Endothelial cell of umbilical vein (primary cell): ENCODE measurements at regions of chr2 and their contacts with region 1.

Region 1: DNA sequence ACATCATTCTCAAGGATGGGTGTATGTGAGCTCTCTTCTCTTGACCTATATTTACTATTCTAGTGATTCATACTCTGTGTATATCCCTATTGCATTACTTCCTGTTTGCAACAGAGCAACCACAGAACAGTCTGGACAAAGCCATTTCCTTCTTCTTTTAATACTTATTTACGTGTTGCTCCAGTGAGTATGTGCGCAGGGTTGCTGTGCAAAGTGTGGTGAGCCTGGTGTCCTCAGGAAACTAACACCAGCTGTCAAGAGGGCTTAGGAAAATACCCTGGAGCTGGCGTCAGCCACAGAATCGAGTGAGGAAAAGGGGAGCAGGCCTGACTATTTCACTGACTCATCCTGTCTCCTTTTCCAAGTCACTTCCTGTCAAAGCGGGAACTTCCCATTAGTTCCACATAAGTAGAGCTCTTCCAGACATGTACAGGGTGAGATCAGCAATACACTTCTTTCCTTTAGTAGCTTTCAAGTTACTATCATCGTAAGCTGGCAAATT is 214.1 kb upstream of the COPS8 start:
- DNase-seq: peak; percentile 96
- H3K4me3 ChIP-seq: no peak overlapping the region
- H3K27ac ChIP-seq: peak overlapping the region; percentile 92
- H3K4me1 ChIP-seq: peaks cover 35% of the 10 kb centered on the region
- H3K27me3 ChIP-seq: no peaks in the 10 kb centered on the region
- CTCF ChIP-seq: no peak
- POLR2A ChIP-seq: no peak

Region 2: DNA sequence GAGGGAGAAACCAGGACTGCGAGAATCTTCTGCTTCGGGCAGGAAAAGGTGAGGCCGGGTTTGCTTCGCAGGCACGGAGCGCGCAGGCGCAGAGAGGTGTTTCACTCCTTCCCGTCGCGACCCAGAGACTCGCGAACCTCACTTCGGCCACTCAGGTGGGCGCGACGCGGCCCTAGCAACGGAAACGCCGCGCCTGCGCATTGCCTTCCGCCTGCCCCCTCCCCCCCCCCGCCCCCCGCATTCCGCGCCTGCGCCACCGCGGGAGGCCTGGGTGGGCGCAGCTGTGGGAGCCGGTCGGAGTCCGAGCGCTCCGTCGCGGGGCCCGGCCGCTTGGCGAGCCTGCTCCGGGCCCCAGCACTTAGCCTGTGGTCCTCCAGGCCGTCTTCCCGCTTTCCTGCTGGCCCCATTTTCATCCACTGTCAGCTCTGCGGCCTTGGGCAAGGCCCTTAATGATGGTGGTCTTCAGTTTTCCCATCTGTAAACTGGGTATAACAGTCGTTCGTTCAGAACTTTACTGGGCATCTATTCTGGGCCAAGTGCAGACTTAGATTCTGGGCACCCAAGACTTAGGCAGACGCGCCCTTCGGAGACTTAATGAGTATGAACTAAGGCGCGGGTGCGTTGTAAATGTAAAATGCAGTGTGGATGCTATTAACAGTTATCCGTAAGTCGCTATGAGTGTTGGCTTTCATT is 364.0 kb before region 1 on chr2:
- CTCF ChIA-PET with region 1: no interaction called
- POLR2A ChIA-PET with region 1: no interaction called
- dilution Hi-C with region 1: no loop called
- intact Hi-C with region 1: loop called (anchors 5 kb)
- DNase-seq: peak; percentile 66
- H3K4me3 ChIP-seq: peak overlapping the region; percentile 40 to 75 (median 59)
- H3K27ac ChIP-seq: no peak overlapping the region
- H3K4me1 ChIP-seq: peaks cover 22% of the 10 kb centered on the region
- H3K27me3 ChIP-seq: peaks cover 4 to 9% of the 10 kb centered on the region in 2 experiments
- CTCF ChIP-seq: no peak
- POLR2A ChIP-seq: no peak

Region 3: GRCh38 chr2:236824877-236825692 is 46.5 kb before region 1 on chr2:
- CTCF ChIA-PET with region 1: interaction called, 6 read pairs
- POLR2A ChIA-PET with region 1: no interaction called
- dilution Hi-C with region 1: no loop called
- intact Hi-C with region 1: loop called (anchors 1 kb)
- DNase-seq: peak; percentile 18
- H3K4me3 ChIP-seq: no peak overlapping the region
- H3K27ac ChIP-seq: no peak overlapping the region
- H3K4me1 ChIP-seq: peaks cover 37% of the 10 kb centered on the region
- H3K27me3 ChIP-seq: no peaks in the 10 kb centered on the region
- CTCF ChIP-seq: no peak
- POLR2A ChIP-seq: no peak

Region 4: GRCh38 chr2:236852100-236852978 is 19.2 kb before region 1 on chr2:
- CTCF ChIA-PET with region 1: interaction called, 4 read pairs
- POLR2A ChIA-PET with region 1: no interaction called
- dilution Hi-C with region 1: no loop called
- intact Hi-C with region 1: loop called (anchors 2 kb)
- DNase-seq: peak; percentile 95
- H3K4me3 ChIP-seq: no peak overlapping the region
- H3K27ac ChIP-seq: peak overlapping the region; percentile 46
- H3K4me1 ChIP-seq: peaks cover 8% of the 10 kb centered on the region
- H3K27me3 ChIP-seq: no peaks in the 10 kb centered on the region
- CTCF ChIP-seq: no peak
- POLR2A ChIP-seq: no peak

Region 5: GRCh38 chr2:237012577-237013267 is 141.2 kb after region 1 on chr2:
- CTCF ChIA-PET with region 1: no interaction called
- POLR2A ChIA-PET with region 1: no interaction called
- dilution Hi-C with region 1: no loop called
- intact Hi-C with region 1: loop called (anchors 5 kb)
- DNase-seq: peak; percentile 96
- H3K4me3 ChIP-seq: no peak overlapping the region
- H3K27ac ChIP-seq: peak overlapping the region; percentile 54
- H3K4me1 ChIP-seq: peaks cover 24% of the 10 kb centered on the region
- H3K27me3 ChIP-seq: no peaks in the 10 kb centered on the region
- CTCF ChIP-seq: no peak
- POLR2A ChIP-seq: no peak